Activated CD4-positive, alpha-beta T cell treated with anti-CD3 and anti-CD28 coated beads, Interleukin-2, amount 10 ng/mL, durations not matched to agents 24 days and 14 days (primary cell): ENCODE measurements at regions of chr2 and their contacts with region 1.

Region 1: DNA sequence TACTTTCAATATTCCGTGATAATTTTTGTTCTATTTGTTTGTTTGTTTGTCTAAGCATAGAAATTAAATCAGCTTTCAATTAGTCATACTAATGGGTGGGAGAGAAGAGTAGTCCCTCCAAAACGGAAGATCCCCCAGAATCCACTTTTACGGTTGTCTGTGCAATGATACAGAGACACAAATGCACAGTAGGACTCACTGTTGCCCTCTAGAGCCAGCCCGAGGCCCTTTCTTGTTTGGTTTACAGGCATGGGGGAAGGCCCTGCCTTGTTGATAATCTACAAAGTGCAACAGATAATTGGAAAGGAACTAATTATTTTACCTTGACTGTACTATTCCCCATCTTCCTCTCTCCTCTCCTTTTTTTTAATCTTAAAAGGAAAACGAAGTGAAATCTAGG is 121.1 kb downstream of the ACOXL start:
- DNase-seq: peak; percentile 84
- H3K4me3 Mint-ChIP-seq: no peak overlapping the region
- H3K27ac Mint-ChIP-seq: peak overlapping the region; percentile 64
- H3K4me1 Mint-ChIP-seq: peaks cover 67% of the 10 kb centered on the region
- H3K27me3 Mint-ChIP-seq: peaks cover 31% of the 10 kb centered on the region

Region 2: GRCh38 chr2:110677530-110678456 is 175.7 kb before region 1 on chr2 and contains the start of gene BUB1:
- intact Hi-C with region 1: loop called (anchors 10 kb)
- DNase-seq: peak; percentile 99
- H3K4me3 Mint-ChIP-seq: peak within 1 kb of the TSS; percentile 98
- H3K27ac Mint-ChIP-seq: peak within 1 kb of the TSS; percentile 99
- H3K4me1 Mint-ChIP-seq: peaks cover 33% of the 10 kb centered on the region
- H3K27me3 Mint-ChIP-seq: peaks cover 9% of the 10 kb centered on the region
- total RNA-seq, gene BUB1: 58.4 and 61.7 TPM in 2 replicates

Region 3: GRCh38 chr2:111705711-111706336 is 852.3 kb after region 1 on chr2:
- intact Hi-C with region 1: loop called (anchors 10 kb)
- DNase-seq: peak; percentile 87
- H3K4me3 Mint-ChIP-seq: peak overlapping the region; percentile 61
- H3K27ac Mint-ChIP-seq: peak overlapping the region; percentile 91
- H3K4me1 Mint-ChIP-seq: peaks cover 61% of the 10 kb centered on the region
- H3K27me3 Mint-ChIP-seq: no peaks in the 10 kb centered on the region